ENCODE measurements at regions of chr12 and their contacts with region 1.

Region 1: DNA sequence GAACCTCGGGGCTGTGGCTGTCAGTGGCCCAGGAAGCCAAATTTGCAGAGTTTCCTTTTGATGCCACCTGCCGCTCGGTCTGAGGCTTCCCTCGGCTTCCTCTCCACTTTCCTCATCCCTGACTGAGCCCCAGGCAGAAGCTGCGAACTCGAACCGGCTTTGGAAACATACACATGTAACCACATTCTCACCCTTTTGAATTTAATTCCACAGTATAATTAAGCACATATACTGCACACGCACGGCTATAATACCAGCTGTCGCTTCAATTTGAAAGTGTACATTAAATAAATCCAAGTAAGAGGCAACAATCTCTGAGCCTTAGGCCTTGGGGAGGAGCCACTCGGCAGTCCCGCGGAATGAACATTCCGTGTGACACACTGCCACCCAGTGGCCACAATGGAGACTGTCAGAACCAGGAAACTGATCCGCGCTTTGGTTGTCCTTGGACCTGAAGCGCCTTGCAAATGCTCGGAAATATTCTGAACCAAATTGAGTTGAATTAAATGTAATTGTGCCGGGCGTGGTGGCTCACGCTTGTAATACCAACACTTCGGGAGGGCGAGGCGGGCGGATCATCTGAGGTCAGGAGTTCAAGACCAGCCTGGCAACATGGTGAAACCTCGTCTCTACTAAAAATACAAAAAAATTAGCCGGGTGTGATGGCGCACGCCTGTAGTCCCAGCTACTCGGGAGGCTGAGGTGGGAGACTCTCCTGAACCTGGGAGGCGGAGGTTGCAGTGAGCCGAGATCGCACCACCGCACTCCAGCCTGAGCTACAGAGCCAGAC is 117.9 kb upstream of the TMPO start:
- DNase-seq: peak; percentile 89
- H3K4me3 ChIP-seq: peak overlapping the region; percentile 62
- H3K27ac ChIP-seq: peak overlapping the region; percentile 31
- H3K4me1 ChIP-seq: peaks cover 50% of the 10 kb centered on the region
- CTCF ChIP-seq: peak; percentile 92

Region 2: DNA sequence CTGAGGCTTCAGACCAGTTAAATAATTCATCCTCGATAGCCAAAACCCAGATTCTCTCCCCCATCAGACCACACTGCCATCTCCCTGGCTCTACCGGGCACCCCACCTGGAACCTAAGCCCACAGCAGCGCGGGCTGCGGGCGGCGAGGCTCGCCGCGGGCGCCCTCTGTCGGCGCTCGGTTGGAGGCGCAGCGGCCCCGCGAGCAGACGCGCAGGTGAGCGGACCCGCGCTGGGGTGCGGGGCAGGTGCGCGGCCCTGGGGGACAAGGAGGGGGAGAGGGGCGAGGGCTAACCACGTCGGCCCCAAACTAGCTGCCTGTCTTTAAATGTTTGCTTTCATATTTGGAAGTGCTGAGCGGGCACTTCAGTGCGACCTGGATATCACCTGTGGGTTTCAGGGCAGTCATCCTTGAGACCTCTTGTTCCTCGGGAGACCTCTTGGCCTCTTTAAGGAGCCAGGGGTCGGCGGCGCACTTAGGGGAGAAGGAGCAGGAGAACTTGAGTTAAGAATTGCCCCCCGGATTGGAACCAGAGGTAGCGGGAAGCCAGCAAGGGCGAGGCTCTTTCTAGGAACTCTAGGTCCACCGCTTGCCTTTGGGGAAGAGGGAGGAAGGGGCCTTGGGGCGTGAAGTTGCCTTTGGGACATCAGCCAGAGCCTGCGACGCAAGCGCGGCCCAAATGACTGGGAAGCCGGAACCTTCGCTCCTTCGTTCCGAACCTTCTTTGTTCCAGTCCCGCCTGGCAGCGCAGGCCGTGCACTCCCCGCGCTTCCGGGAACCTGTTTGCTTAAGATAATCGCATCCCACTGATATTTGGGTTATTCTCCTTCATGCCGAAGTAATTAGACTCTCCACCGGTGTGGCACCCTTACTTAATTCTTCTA is 1411.8 kb before region 1 on chr12:
- CTCF ChIA-PET with region 1: no interaction called
- POLR2A ChIA-PET with region 1: no interaction called
- intact Hi-C with region 1: loop called (anchors 5 kb)
- DNase-seq: peak; percentile 27
- H3K4me3 ChIP-seq: no peak overlapping the region
- H3K27ac ChIP-seq: no peak overlapping the region
- H3K4me1 ChIP-seq: peaks cover 3% of the 10 kb centered on the region
- CTCF ChIP-seq: peak; percentile 82

Region 3: DNA sequence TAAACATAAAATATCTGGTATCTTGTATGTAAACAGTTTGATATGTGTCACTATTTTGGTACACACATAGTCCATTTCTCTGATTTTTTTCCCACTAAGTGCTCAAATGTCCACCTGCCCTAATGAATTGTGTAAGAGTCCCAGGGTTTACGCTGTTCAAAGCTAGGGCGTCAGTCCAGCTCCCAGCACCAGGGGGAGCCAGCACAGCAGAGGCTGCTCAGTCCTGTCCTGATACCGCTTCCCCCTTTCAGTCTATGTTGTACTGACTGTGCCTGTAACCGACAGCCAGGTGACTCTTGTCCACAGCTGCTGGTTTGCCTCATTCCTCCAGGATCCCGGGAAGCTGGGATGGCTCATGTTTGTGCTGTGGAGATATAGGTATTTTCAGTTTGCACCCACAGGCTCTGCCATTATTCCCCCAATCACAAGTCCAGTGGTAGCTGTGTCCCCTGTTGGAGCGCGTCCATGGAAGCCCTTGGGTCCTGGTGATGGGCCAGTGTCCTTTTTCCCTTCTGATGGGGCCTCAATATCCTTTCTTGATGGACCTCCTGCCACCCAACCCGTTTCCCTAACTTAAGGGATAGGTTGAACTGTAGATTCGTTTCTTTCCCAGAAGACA is 1248.5 kb before region 1 on chr12:
- CTCF ChIA-PET with region 1: no interaction called
- POLR2A ChIA-PET with region 1: no interaction called
- intact Hi-C with region 1: loop called (anchors 2 kb)
- DNase-seq: peak; percentile 65
- H3K4me3 ChIP-seq: no peak overlapping the region
- H3K27ac ChIP-seq: no peak overlapping the region
- H3K4me1 ChIP-seq: no peaks in the 10 kb centered on the region
- CTCF ChIP-seq: peak; percentile 90

Region 4: GRCh38 chr12:98013560-98013959 is 384.0 kb before region 1 on chr12:
- CTCF ChIA-PET with region 1: no interaction called
- POLR2A ChIA-PET with region 1: no interaction called
- intact Hi-C with region 1: no loop called
- DNase-seq: no peak
- H3K4me3 ChIP-seq: no peak overlapping the region
- H3K27ac ChIP-seq: no peak overlapping the region
- H3K4me1 ChIP-seq: no peaks in the 10 kb centered on the region
- CTCF ChIP-seq: no peak

Region 5: DNA sequence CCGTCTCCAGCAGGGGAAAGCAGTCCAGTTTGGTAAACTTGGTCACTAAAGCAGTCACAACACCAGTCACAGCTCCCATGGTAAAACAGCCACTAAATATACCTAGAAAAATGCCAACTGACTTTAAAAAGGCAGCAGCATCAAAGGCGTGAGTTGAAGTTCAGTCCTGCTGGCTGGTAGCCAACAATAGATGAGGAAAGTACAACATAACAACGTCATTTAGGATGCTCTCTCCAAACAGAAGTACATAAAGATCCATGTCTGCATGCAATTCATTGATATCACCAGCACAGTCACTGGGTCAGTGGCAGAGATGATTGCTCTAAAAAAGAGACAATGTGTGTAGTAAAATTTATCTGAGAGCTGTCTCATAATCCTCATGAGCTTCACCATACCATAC is 58.5 kb after region 1 on chr12:
- CTCF ChIA-PET with region 1: no interaction called
- POLR2A ChIA-PET with region 1: no interaction called
- intact Hi-C with region 1: no loop called
- DNase-seq: no peak
- H3K4me3 ChIP-seq: no peak overlapping the region
- H3K27ac ChIP-seq: no peak overlapping the region
- H3K4me1 ChIP-seq: no peaks in the 10 kb centered on the region
- CTCF ChIP-seq: no peak

Region 6: GRCh38 chr12:98483621-98484503 is 86.4 kb after region 1 on chr12:
- CTCF ChIA-PET with region 1: no interaction called
- POLR2A ChIA-PET with region 1: no interaction called
- intact Hi-C with region 1: no loop called
- DNase-seq: no peak
- H3K4me3 ChIP-seq: no peak overlapping the region
- H3K27ac ChIP-seq: no peak overlapping the region
- H3K4me1 ChIP-seq: no peaks in the 10 kb centered on the region
- CTCF ChIP-seq: no peak